AG04450 (cell line): ENCODE measurements at regions of chr10 and their contacts with region 1.

Region 1: GRCh38 chr10:30736685-30737232 is 107.2 kb upstream of the LYZL2 start:
- DNase-seq: peak; percentile 99
- H3K4me3 ChIP-seq: no peak overlapping the region
- H3K27ac ChIP-seq: peak overlapping the region; percentile 95
- H3K27me3 ChIP-seq: no peaks in the 10 kb centered on the region
- CTCF ChIP-seq: no peak

Region 2: GRCh38 chr10:30671026-30671616 is 65.6 kb before region 1 on chr10:
- CTCF ChIA-PET with region 1: no interaction called
- POLR2A ChIA-PET with region 1: no interaction called
- DNase-seq: peak; percentile 75
- H3K4me3 ChIP-seq: peak overlapping the region; percentile 32; the same call in 1 of the 2 replicates
- H3K27ac ChIP-seq: no peak overlapping the region
- H3K27me3 ChIP-seq: no peaks in the 10 kb centered on the region
- CTCF ChIP-seq: peak; percentile 76

Region 3: DNA sequence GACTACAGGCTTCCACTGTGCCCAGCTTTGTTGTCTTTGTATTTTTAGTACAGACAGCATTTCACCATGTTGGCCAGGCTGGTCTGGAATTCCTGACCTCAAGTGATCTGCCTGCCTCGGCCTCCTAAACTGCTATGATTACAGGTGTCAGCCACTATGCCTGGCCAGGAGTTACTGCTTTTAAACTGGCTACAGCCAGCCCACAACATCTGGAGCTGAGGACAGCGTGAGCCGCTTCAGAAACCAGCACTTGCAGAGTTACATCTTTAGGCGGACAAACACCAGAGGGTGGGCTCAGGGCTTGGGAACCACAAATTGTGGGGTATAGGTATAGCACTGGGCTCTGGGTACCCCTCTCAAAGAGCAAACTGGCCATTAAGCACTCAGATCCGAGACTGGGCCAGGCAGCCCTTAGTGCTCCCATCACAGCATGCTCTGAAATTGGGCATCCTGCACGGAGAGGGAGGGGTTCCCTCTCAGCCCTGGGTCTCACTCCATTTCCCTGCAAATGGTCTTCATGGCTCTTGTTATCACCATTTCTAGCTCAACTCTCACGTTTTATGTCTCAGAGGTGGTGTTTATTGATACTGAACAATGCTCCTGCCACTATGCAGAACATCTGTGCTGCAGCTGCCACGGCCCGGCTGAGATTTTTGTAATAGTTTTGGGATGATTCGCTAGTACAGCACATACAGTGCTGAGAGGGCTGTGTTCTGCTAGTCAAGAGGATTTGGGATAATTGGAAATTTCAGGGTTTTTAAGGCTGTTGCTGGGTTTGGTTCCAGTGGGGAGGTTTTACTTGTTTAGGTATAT is 39.2 kb after region 1 on chr10:
- CTCF ChIA-PET with region 1: no interaction called
- POLR2A ChIA-PET with region 1: interaction called, 14 read pairs
- DNase-seq: peak; percentile 91
- H3K4me3 ChIP-seq: no peak overlapping the region
- H3K27ac ChIP-seq: peak overlapping the region; percentile 93
- H3K27me3 ChIP-seq: no peaks in the 10 kb centered on the region
- CTCF ChIP-seq: no peak

Region 4: DNA sequence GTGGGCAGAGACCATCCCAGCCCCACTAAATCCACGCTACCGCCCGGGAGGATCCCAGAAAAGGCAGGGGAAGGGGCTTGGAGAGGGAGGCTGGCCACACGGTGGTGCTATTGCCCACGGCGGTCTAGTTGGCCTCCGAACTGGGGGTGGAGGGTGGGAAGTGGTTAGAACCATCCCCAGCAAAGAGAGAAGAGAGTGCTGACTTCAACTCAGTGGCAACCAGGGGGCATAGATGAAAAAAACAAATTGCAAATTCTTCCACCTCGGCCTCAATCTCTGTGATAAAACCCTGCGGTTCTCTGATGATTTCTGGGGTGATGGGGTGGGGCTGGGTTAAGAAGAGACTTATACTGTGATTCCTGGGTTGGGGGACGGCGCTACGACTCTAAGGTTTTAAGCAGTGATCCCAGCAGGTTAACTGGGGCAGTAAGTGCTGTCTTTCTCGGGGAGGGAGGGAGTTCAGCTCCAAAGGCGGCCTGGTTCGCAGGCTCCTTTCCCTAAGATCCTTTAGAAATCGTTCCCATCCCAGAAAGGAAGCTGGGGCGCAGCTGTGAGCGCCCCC is 47.3 kb after region 1 on chr10:
- CTCF ChIA-PET with region 1: interaction called, 14 read pairs
- POLR2A ChIA-PET with region 1: interaction called, 7 read pairs
- DNase-seq: peak; percentile 81
- H3K4me3 ChIP-seq: no peak overlapping the region
- H3K27ac ChIP-seq: peak overlapping the region; percentile 87
- H3K27me3 ChIP-seq: no peaks in the 10 kb centered on the region
- CTCF ChIP-seq: peak; percentile 95

Region 5: GRCh38 chr10:31018962-31019361 is 282.2 kb after region 1 on chr10:
- CTCF ChIA-PET with region 1: no interaction called
- POLR2A ChIA-PET with region 1: no interaction called
- DNase-seq: no peak
- H3K4me3 ChIP-seq: no peak overlapping the region
- H3K27ac ChIP-seq: no peak overlapping the region
- H3K27me3 ChIP-seq: no peaks in the 10 kb centered on the region
- CTCF ChIP-seq: no peak

Region 6: GRCh38 chr10:31133628-31134302 is 397.0 kb after region 1 on chr10:
- CTCF ChIA-PET with region 1: no interaction called
- POLR2A ChIA-PET with region 1: interaction called, 10 read pairs
- DNase-seq: no peak
- H3K4me3 ChIP-seq: peak overlapping the region; percentile 25
- H3K27ac ChIP-seq: peak overlapping the region; percentile 98
- H3K27me3 ChIP-seq: no peaks in the 10 kb centered on the region
- CTCF ChIP-seq: no peak